H1 (cell line): ENCODE measurements at regions of chr7 and their contacts with region 1.

Region 1: DNA sequence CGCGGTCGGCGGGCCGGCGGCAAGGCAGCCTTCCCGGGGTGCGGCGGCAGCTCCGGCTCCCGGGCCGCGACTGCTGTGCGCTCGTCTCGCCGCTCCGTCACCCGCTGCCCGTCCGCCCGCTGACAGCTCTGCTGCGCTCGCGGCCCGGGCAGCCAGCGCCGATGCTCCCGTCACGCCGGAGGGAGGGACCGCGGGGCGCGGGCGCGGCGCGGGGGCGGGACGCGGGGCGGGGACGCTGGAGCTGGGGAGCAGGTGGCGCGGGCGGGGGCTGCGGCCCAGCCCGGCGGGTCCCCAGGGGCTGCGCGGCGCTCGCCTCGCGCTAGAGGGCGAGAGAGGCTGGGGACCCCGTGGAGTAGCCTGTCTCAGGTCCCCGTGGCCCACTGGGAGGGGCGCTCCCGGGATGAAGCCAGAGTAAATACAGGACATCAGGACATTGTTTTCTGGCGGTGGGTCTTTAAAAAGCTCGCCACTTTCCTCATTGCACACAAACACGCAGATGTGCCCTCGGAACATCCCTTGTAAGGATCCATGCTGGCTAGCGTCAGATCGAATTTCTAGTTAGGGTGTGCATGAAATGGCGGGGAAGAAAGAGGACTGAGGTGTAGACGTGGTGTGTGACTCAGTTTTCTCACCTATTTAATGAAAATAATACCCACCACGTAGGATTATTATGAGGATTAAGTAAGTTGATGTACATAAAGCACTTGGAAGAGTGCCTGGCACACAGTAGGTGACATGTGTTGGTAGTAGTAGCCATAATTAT is at the start of gene ELAPOR2:
- DNase-seq: peak; percentile 54 to 90
- H3K4me3 ChIP-seq: peak within 1 kb of the TSS; percentile 59 to 78 (median 70)
- H3K27ac ChIP-seq: no peak within 1 kb of the TSS
- H3K4me1 ChIP-seq: peaks cover 0 to 3% (median 0%) of the 10 kb centered on the region in 4 experiments; a peak in 2 of 7 replicates
- H3K27me3 ChIP-seq: peaks cover 0 to 5% (median 0%) of the 10 kb centered on the region in 4 experiments; a peak in 4 of 7 replicates
- CTCF ChIP-seq: peak; percentile 65 to 82 (median 72)
- EP300 ChIP-seq: no peak
- POLR2A ChIP-seq: no peak
- RAD21 ChIP-seq: peak; percentile 66 to 70
- total RNA-seq, gene ELAPOR2: 32.9 TPM in 2 replicates

Region 2: DNA sequence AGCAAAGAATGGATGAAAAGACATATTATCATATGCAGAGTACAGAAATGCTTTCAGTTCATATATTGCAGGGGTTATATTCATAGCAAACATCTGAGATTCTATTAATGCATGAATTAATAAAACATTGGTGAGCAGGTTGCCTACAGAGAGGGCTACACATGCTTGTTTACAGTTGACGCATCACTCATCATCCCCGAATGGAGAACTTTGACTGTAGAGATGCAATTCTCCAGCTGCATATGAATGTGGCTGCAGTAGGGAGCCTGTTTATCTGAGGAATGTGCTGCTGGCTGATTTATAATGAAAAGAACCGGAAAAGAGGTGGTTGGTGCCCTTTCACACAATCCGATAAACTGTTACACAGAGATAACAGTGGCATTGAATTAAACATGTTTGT is 299.5 kb before region 1 on chr7:
- CTCF ChIA-PET with region 1: no interaction called
- POLR2A ChIA-PET with region 1: no interaction called
- DNase-seq: peak in 1 of 2 experiments; percentile 15
- H3K4me3 ChIP-seq: peak overlapping the region in 1 of 4 experiments; percentile 1; a peak in 1 of 8 replicates
- H3K27ac ChIP-seq: no peak overlapping the region
- H3K4me1 ChIP-seq: peaks cover 0 to 19% (median 9%) of the 10 kb centered on the region in 4 experiments; a peak in 5 of 7 replicates
- H3K27me3 ChIP-seq: no peaks in the 10 kb centered on the region
- CTCF ChIP-seq: no peak
- EP300 ChIP-seq: no peak
- POLR2A ChIP-seq: no peak
- RAD21 ChIP-seq: no peak

Region 3: GRCh38 chr7:87038993-87039716 is 20.6 kb before region 1 on chr7:
- CTCF ChIA-PET with region 1: interaction called, 6 read pairs
- POLR2A ChIA-PET with region 1: interaction called, 14 read pairs
- DNase-seq: no peak
- H3K4me3 ChIP-seq: peak overlapping the region; percentile 55 to 98 (median 76)
- H3K27ac ChIP-seq: peak overlapping the region; percentile 79
- H3K4me1 ChIP-seq: 0 out of 7 replicates have a peak, but pooled peaks cover 0 to 2% (median 0%) of the 10 kb centered on the region in 4 experiments
- H3K27me3 ChIP-seq: no peaks in the 10 kb centered on the region
- CTCF ChIP-seq: no peak
- EP300 ChIP-seq: no peak
- POLR2A ChIP-seq: no peak
- RAD21 ChIP-seq: no peak

Region 4: GRCh38 chr7:87173471-87173870 is 113.8 kb after region 1 on chr7:
- CTCF ChIA-PET with region 1: no interaction called
- POLR2A ChIA-PET with region 1: no interaction called
- DNase-seq: no peak
- H3K4me3 ChIP-seq: no peak overlapping the region
- H3K27ac ChIP-seq: no peak overlapping the region
- H3K4me1 ChIP-seq: no peaks in the 10 kb centered on the region
- H3K27me3 ChIP-seq: no peaks in the 10 kb centered on the region
- CTCF ChIP-seq: no peak
- EP300 ChIP-seq: no peak
- POLR2A ChIP-seq: no peak
- RAD21 ChIP-seq: no peak